ENCODE measurements at regions of chr18 and their contacts with region 1.

Region 1: GRCh38 chr18:20996418-20996817 is 115.2 kb downstream of the ROCK1 start:
- DNase-seq: no peak
- ATAC-seq: no peak
- H3K4me3 ChIP-seq: no peak overlapping the region
- H3K27ac ChIP-seq: no peak overlapping the region
- H3K4me1 ChIP-seq: peaks cover 8% of the 10 kb centered on the region
- H3K27me3 ChIP-seq: no peaks in the 10 kb centered on the region
- CTCF ChIP-seq: no peak

Region 2: GRCh38 chr18:20960735-20961134 is 35.7 kb before region 1 on chr18:
- intact Hi-C with region 1: loop called in 1 of 2 experiments (anchors 5 kb)
- DNase-seq: no peak
- ATAC-seq: no peak
- H3K4me3 ChIP-seq: no peak overlapping the region
- H3K27ac ChIP-seq: no peak overlapping the region
- H3K4me1 ChIP-seq: no peaks in the 10 kb centered on the region
- H3K27me3 ChIP-seq: no peaks in the 10 kb centered on the region
- CTCF ChIP-seq: no peak

Region 3: GRCh38 chr18:21049306-21049705 is 52.9 kb after region 1 on chr18:
- intact Hi-C with region 1: no loop called
- DNase-seq: no peak
- ATAC-seq: no peak
- H3K4me3 ChIP-seq: no peak overlapping the region
- H3K27ac ChIP-seq: no peak overlapping the region
- H3K4me1 ChIP-seq: peaks cover 28% of the 10 kb centered on the region
- H3K27me3 ChIP-seq: no peaks in the 10 kb centered on the region
- CTCF ChIP-seq: no peak

Measured in psoas muscle (tissue), 8 donors.